Posterior vena cava (tissue), 2 donors: ENCODE measurements at regions of chr9 and their contacts with region 1.

Region 1: GRCh38 chr9:129685220-129685932 is 19.9 kb downstream of the PRRX2 start:
- DNase-seq: no peak

Region 2: GRCh38 chr9:129650680-129651235 is 34.6 kb before region 1 on chr9:
- intact Hi-C with region 1: loop called in 1 of 2 experiments (anchors 5 kb)
- DNase-seq: no peak